CD14-positive monocyte (primary cell): ENCODE measurements at regions of chr9 and their contacts with region 1.

Region 1: DNA sequence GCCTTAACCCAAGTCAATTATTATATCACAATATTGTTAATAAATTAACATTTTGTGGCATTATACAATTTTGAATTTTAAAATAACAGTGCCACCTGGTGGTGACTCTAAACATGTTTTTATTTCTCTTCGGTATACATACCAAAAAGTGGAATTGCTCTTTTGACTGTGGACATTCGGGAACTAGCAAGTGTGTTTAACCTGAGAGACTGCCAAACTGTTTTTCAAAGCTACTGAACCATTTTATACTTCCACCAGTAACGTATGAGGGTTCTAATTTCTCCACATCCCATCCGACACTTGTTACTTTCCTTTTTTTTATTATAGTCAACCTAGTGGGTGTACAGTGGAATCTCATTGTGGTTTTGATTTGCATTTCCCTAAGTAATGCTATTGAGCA is 18.3 kb upstream of the HSDL2 start:
- DNase-seq: peak; percentile 33 to 64 (median 41)
- H3K4me3 ChIP-seq: no peak overlapping the region
- H3K4me3 Mint-ChIP-seq: peak overlapping the region in 1 of 2 donors; percentile 51
- H3K27ac ChIP-seq: no peak overlapping the region
- H3K27ac Mint-ChIP-seq: no peak overlapping the region
- H3K4me1 ChIP-seq: no peaks in the 10 kb centered on the region
- H3K4me1 Mint-ChIP-seq: peaks cover 3% of the 10 kb centered on the region
- H3K27me3 ChIP-seq: peaks cover 0 to 2% of the 10 kb centered on the region in 2 donors
- H3K27me3 Mint-ChIP-seq: peaks cover 2 to 9% (median 3%) of the 10 kb centered on the region in 3 donors
- CTCF ChIP-seq: peak; percentile 66

Region 2: DNA sequence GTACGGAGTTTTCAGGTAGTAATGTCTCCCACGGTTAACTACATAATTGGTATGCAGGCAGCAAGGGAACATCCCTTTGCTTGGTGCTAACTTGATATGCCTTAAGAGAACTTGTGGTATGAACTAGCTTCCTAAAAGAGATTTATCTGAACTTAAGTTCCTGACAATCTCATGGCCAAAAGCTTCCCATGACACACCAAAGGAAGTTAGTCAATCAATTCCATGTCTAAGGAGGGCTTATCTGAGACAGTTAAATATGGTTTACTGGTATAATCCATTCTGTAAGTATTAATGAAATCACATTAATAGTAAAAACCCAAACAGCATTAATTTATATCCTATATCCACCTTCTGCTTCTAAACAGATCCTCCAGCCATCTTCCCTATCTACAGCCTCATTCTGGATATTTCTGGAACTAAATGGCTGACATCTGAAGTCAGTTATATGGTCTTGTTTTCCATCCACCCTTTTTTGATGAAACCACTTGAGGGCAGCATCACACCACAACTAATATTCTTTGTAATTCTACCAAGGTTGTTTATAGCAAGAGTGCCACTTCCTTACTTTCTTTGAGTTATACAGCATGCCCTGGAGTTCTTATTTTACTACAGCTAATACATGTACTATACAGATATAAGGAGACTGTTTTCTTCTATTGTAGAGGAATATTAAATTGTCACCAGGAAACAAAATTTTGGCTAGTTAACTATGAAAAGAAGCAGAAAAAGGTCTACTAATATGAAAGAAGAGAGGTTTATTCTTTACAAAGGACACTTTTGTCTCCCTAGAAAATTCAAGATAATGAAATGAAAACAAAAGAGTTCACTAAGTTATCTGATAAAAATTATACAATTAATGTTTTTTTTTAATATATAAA is 601.6 kb before region 1 on chr9:
- intact Hi-C with region 1: loop called in 1 of 2 experiments (anchors 10 kb)
- DNase-seq: peak; percentile 32 to 48 (median 39)
- H3K4me3 ChIP-seq: no peak overlapping the region
- H3K4me3 Mint-ChIP-seq: no peak overlapping the region
- H3K27ac ChIP-seq: no peak overlapping the region
- H3K27ac Mint-ChIP-seq: no peak overlapping the region
- H3K4me1 ChIP-seq: no peaks in the 10 kb centered on the region
- H3K4me1 Mint-ChIP-seq: no peaks in the 10 kb centered on the region
- H3K27me3 ChIP-seq: no peaks in the 10 kb centered on the region
- H3K27me3 Mint-ChIP-seq: peaks cover 0 to 2% (median 0%) of the 10 kb centered on the region in 3 donors
- CTCF ChIP-seq: peak; percentile 65

Region 3: DNA sequence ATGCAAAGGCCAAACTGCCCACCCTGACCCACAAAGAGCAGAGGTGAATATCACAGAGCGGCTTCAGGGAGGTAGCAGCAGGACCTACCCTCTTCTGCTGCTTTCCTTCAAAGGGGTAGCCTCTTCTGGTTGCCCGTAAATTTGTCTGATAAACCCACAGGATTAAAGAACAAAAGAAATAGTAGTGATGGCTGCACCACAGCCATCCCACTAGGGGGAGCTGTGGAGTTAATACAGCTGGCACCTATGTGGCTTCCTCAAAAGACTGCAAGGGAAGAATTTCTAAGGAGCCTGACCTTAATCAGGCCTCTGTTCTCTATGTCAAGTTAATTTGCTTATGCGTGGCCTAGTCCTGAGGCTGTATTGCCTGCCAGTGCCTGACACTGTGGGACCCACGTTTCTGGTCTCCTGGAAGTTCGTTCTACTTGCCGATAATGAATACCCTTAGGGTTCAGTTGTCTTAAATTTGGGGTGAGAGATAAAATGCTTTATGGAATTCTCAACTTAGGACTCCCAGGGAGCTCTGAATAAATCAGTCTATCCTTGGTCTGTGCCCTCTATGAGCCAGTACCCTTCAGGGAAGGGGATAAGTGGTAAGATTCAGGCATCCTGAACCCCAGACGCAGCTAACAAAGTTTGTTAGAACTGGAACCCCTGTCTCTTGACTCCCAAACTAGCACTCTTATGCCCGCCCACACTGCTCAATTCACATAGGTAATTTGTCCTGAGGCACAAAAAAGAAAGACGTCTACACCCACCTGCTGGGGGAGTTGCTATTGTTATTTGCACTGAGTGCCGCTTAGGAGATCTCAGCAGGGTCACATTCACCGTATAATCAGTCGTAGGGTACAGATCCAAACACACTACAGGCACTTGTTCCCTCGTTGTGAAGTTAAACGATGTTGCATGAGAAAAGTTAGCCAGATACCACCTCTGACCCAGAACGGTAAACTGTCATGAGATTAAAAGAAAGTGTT is 263.6 kb before region 1 on chr9:
- intact Hi-C with region 1: loop called (anchors 5 kb)
- DNase-seq: peak; percentile 67 to 76 (median 72)
- H3K4me3 ChIP-seq: no peak overlapping the region
- H3K4me3 Mint-ChIP-seq: no peak overlapping the region
- H3K27ac ChIP-seq: peak overlapping the region in 1 of 2 donors; percentile 62
- H3K27ac Mint-ChIP-seq: peak overlapping the region in 6 of 7 donors; percentile 23 to 78 (median 48)
- H3K4me1 ChIP-seq: peaks cover 18 to 25% of the 10 kb centered on the region in 2 donors
- H3K4me1 Mint-ChIP-seq: peaks cover 15% of the 10 kb centered on the region
- H3K27me3 ChIP-seq: no peaks in the 10 kb centered on the region
- H3K27me3 Mint-ChIP-seq: no peaks in the 10 kb centered on the region
- CTCF ChIP-seq: peak; percentile 95

Region 4: DNA sequence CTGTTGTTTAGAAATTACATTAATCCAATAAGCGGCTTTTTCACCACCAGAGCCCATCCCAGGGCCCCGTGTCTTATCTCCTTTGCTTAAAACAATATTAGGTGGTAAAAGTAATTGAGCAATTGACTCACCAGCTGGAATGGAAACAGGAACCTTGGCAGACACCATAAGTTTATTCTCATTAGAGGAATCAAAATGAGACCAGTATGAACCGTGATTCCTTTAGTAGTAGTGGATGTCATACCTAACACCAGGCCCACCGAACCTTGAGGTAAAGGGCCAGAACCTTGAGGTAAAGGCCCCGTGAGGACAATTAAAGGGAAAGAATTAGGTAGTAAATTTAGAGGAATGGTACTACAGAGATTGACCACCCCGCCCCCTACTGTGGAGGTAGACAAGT is 34.8 kb after region 1 on chr9:
- intact Hi-C with region 1: no loop called
- DNase-seq: no peak
- H3K4me3 ChIP-seq: no peak overlapping the region
- H3K4me3 Mint-ChIP-seq: no peak overlapping the region
- H3K27ac ChIP-seq: no peak overlapping the region
- H3K27ac Mint-ChIP-seq: no peak overlapping the region
- H3K4me1 ChIP-seq: no peaks in the 10 kb centered on the region
- H3K4me1 Mint-ChIP-seq: no peaks in the 10 kb centered on the region
- H3K27me3 ChIP-seq: no peaks in the 10 kb centered on the region
- H3K27me3 Mint-ChIP-seq: no peaks in the 10 kb centered on the region
- CTCF ChIP-seq: no peak